GM10248 (cell line): ENCODE measurements at regions of chr14 and their contacts with region 1.

Region 1: DNA sequence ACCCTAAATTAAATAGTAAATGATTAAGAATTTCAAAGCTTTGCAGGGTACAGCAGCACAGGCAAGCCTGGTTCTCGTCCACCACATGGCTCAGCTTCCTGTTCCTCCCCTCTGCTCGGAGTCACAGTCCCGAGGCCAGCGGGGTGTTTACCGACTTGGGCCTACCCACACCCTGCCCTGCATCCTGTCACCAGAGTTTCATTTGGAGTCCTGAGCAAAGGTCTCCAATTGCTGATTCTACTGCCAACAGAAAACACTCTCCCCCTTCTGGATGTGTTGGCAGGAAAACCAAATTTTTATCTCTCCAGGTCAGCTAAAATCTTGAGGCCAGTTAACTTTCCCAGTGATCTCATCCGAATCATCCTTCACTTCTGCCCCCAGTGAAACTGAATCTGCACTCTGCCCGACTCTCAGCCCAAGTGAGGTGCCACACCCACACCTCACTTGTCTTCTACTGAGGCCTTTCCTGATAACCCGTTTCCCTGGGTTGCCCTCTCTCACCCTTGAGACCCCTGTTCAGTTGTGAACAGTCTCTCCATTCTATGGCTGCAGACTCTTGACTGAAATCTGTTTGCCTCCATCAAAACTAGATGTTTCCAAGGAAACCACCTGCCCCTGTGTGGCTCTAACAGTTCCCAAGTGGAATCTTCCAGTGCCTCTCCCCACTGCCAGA is 71.2 kb downstream of the VCPKMT start:
- DNase-seq: peak; percentile 65
- CTCF ChIP-seq: no peak

Region 2: DNA sequence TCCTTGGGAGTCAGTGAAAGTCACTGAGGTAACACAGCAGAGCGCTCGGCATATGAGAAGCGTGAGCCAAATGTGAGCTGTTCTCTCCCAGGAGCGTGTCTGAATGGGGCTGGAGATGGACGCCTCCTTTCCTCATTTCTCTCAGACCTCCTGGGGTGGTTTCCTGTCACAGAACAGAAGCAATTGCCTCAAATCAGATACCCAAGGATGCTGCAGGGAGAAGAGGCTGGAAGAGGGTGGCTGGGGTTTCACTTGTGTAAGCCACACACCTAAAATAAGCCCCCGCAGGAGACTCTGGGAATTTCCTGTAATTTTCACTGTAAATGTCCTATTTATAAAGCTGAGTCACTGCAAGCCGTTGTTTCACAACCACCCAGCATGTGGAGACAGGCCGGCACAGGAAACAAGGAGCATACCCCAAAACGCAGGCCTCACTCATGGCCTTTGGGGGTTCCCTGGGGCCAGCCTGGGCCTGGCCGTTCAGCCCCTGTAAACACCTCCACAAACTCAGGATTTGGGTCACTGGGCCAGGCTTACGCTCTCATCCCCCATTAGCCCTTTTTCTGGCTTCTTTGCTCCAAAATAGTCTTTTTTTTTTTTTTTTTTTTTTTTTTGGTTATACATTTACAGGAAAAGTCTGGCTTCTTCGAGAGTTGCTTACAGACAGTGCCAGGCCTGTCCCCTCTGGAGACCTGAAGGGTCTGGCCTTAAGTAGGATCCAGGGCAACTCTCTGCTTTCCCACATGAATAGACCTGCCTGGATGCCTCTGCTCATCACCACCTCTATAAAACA is 15.9 kb after region 1 on chr14:
- CTCF ChIA-PET with region 1: interaction called, 10 read pairs
- POLR2A ChIA-PET with region 1: no interaction called
- DNase-seq: peak; percentile 46
- CTCF ChIP-seq: no peak